CD4-positive, alpha-beta memory T cell (primary cell): ENCODE measurements at regions of chr15 and their contacts with region 1.

Region 1: DNA sequence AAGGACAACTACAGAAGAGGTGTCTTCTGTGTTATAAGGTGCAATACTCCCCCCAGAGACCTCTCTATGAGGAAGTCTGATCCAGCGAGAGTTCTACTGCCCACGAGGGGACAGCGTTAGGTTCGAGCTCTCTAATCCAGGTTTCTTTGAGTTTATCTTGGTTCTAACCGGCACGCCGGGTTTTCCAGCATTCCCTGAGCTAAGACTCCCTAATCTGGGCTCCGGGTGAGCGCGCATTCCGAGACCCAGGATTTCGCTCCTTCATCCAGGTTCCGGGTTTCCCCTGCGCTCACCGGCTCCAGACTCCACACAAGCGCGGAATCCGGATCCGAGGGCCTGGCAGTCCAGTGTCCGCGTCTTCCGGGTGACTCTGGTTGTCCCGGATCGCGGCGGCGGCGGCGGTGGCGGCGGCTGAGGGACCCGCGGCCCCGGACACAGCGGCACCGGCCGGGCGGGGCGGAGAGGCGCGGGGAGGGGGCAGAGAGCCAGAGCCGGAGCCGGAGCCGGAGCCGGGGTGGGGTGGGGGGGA is at the start of gene ZNF609:
- DNase-seq: peak; percentile 83 to 90 (median 85)
- H3K4me3 ChIP-seq: peak within 1 kb of the TSS; percentile 72 to 86
- H3K4me3 Mint-ChIP-seq: peak within 1 kb of the TSS; percentile 91 to 96 (median 94)
- H3K27ac ChIP-seq: peak within 1 kb of the TSS; percentile 60
- H3K27ac Mint-ChIP-seq: peak within 1 kb of the TSS; percentile 87 to 96 (median 95)
- H3K4me1 ChIP-seq: peaks cover 48% of the 10 kb centered on the region
- H3K4me1 Mint-ChIP-seq: peaks cover 41 to 71% (median 54%) of the 10 kb centered on the region in 4 donors
- H3K27me3 ChIP-seq: no peaks in the 10 kb centered on the region
- H3K27me3 Mint-ChIP-seq: no peaks in the 10 kb centered on the region
- total RNA-seq, gene ZNF609: 53.7 to 56.9 TPM

Region 2: GRCh38 chr15:64387562-64388168 is 72.6 kb before region 1 on chr15 and contains the start of gene TRIP4:
- CTCF ChIA-PET with region 1: interaction called, 4 read pairs
- POLR2A ChIA-PET with region 1: interaction called, 6 read pairs
- intact Hi-C with region 1: loop called (anchors 1 kb)
- DNase-seq: peak; percentile 95 to 98 (median 96)
- H3K4me3 ChIP-seq: peak within 1 kb of the TSS; percentile 79 to 89
- H3K4me3 Mint-ChIP-seq: peak within 1 kb of the TSS; percentile 96 to 100 (median 98)
- H3K27ac ChIP-seq: peak within 1 kb of the TSS; percentile 64
- H3K27ac Mint-ChIP-seq: peak within 1 kb of the TSS; percentile 80 to 99 (median 96)
- H3K4me1 ChIP-seq: peaks cover 12% of the 10 kb centered on the region
- H3K4me1 Mint-ChIP-seq: peaks cover 16 to 19% (median 19%) of the 10 kb centered on the region in 4 donors
- H3K27me3 ChIP-seq: no peaks in the 10 kb centered on the region
- H3K27me3 Mint-ChIP-seq: no peaks in the 10 kb centered on the region
- total RNA-seq, gene TRIP4: 28.2 to 29.4 TPM

Region 3: GRCh38 chr15:64503197-64503596 is 42.9 kb after region 1 on chr15:
- CTCF ChIA-PET with region 1: interaction called, 3 read pairs
- POLR2A ChIA-PET with region 1: interaction called, 14 read pairs
- intact Hi-C with region 1: loop called (anchors 2 kb)
- DNase-seq: peak in 1 of 5 donors; percentile 20
- H3K4me3 ChIP-seq: peak overlapping the region; percentile 23 to 30
- H3K4me3 Mint-ChIP-seq: peak overlapping the region; percentile 49 to 80 (median 68)
- H3K27ac ChIP-seq: peak overlapping the region; percentile 52
- H3K27ac Mint-ChIP-seq: peak overlapping the region; percentile 68 to 94 (median 84)
- H3K4me1 ChIP-seq: peaks cover 82% of the 10 kb centered on the region
- H3K4me1 Mint-ChIP-seq: peaks cover 68 to 91% (median 80%) of the 10 kb centered on the region in 4 donors
- H3K27me3 ChIP-seq: no peaks in the 10 kb centered on the region
- H3K27me3 Mint-ChIP-seq: no peaks in the 10 kb centered on the region

Region 4: GRCh38 chr15:64681424-64682024 is 221.3 kb after region 1 on chr15:
- CTCF ChIA-PET with region 1: no interaction called
- POLR2A ChIA-PET with region 1: no interaction called
- intact Hi-C with region 1: no loop called
- DNase-seq: no peak
- H3K4me3 ChIP-seq: no peak overlapping the region
- H3K4me3 Mint-ChIP-seq: no peak overlapping the region
- H3K27ac ChIP-seq: no peak overlapping the region
- H3K27ac Mint-ChIP-seq: peak overlapping the region in 4 of 7 donors; percentile 22 to 68 (median 48)
- H3K4me1 ChIP-seq: no peaks in the 10 kb centered on the region
- H3K4me1 Mint-ChIP-seq: peaks cover 0 to 7% (median 3%) of the 10 kb centered on the region in 4 donors
- H3K27me3 ChIP-seq: no peaks in the 10 kb centered on the region
- H3K27me3 Mint-ChIP-seq: no peaks in the 10 kb centered on the region